ENCODE measurements at regions of chr12 and their contacts with region 1.

Region 1: GRCh38 chr12:108457006-108457733 is 57.9 kb upstream of the FICD start:
- DNase-seq: peak in 4 of 5 donors; percentile 2 to 41 (median 25)
- H3K4me3 ChIP-seq: no peak overlapping the region
- H3K4me3 Mint-ChIP-seq: no peak overlapping the region
- H3K27ac ChIP-seq: no peak overlapping the region
- H3K27ac Mint-ChIP-seq: no peak overlapping the region
- H3K4me1 ChIP-seq: no peaks in the 10 kb centered on the region
- H3K4me1 Mint-ChIP-seq: no peaks in the 10 kb centered on the region
- H3K27me3 ChIP-seq: no peaks in the 10 kb centered on the region
- H3K27me3 Mint-ChIP-seq: peaks cover 15 to 36% of the 10 kb centered on the region in 2 donors

Region 2: DNA sequence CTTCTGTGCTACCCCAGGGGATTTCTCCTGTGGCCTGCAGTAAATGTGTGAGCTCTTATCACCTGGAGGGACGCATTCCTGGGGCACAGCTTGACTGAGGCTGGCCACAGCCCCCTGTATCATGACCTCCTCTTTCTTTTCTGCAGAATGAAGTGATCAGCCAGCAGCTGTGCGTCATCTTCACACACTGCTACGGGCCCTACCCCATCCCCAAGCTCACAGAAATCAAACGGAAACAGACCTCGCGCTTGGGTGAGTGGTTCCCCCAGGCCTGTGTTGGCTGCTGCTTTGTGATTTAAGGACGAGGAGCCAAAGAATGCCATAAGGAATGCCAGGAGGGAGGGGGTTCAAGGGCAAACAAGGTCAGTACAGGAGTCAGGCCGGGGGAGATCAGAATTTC is 822.0 kb before region 1 on chr12:
- CTCF ChIA-PET with region 1: no interaction called
- POLR2A ChIA-PET with region 1: no interaction called
- intact Hi-C with region 1: no loop called
- DNase-seq: no peak
- H3K4me3 ChIP-seq: no peak overlapping the region
- H3K4me3 Mint-ChIP-seq: no peak overlapping the region
- H3K27ac ChIP-seq: no peak overlapping the region
- H3K27ac Mint-ChIP-seq: peak overlapping the region in 1 of 7 donors; percentile 48
- H3K4me1 ChIP-seq: no peaks in the 10 kb centered on the region
- H3K4me1 Mint-ChIP-seq: no peaks in the 10 kb centered on the region
- H3K27me3 ChIP-seq: no peaks in the 10 kb centered on the region
- H3K27me3 Mint-ChIP-seq: no peaks in the 10 kb centered on the region

Region 3: DNA sequence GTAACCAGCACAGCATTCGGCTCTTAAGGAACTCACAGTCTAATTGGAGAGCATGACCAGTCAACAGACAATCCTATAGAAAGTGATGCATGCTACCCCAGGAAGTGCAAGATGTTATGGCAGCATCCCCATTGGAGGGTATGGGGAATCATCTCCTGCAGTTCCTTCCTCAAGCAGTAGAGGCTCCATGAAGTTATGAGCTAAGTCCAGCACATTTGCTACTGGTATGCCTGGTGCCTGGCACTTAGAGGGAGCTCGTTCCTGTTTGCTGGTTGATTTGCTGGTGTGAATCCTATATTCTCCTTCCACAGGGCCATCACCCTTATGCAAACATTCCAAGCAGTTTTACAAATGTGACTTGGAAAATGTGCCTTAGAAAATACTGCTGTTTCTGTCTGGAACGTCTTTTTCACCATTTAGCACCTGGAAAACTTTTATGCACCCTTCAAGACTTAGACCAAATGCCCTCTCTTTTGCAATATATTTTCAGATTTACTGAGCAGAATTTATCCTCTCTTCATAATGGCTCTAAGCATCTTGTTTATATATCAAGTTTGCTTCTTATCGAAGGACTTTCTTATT is 464.2 kb before region 1 on chr12:
- CTCF ChIA-PET with region 1: interaction called, 6 read pairs
- POLR2A ChIA-PET with region 1: no interaction called
- intact Hi-C with region 1: loop called (anchors 2 kb)
- DNase-seq: no peak
- H3K4me3 ChIP-seq: no peak overlapping the region
- H3K4me3 Mint-ChIP-seq: no peak overlapping the region
- H3K27ac ChIP-seq: no peak overlapping the region
- H3K27ac Mint-ChIP-seq: no peak overlapping the region
- H3K4me1 ChIP-seq: no peaks in the 10 kb centered on the region
- H3K4me1 Mint-ChIP-seq: no peaks in the 10 kb centered on the region
- H3K27me3 ChIP-seq: no peaks in the 10 kb centered on the region
- H3K27me3 Mint-ChIP-seq: peaks cover 1 to 12% of the 10 kb centered on the region in 2 donors

Region 4: GRCh38 chr12:108234158-108234557 is 223.0 kb before region 1 on chr12:
- CTCF ChIA-PET with region 1: interaction called, 12 read pairs
- POLR2A ChIA-PET with region 1: no interaction called
- intact Hi-C with region 1: no loop called
- DNase-seq: no peak
- H3K4me3 ChIP-seq: no peak overlapping the region
- H3K4me3 Mint-ChIP-seq: no peak overlapping the region
- H3K27ac ChIP-seq: no peak overlapping the region
- H3K27ac Mint-ChIP-seq: no peak overlapping the region
- H3K4me1 ChIP-seq: no peaks in the 10 kb centered on the region
- H3K4me1 Mint-ChIP-seq: no peaks in the 10 kb centered on the region
- H3K27me3 ChIP-seq: no peaks in the 10 kb centered on the region
- H3K27me3 Mint-ChIP-seq: peaks cover 13 to 25% of the 10 kb centered on the region in 2 donors

Region 5: GRCh38 chr12:108468201-108468968 is 11.2 kb after region 1 on chr12:
- CTCF ChIA-PET with region 1: interaction called, 18 read pairs
- POLR2A ChIA-PET with region 1: no interaction called
- intact Hi-C with region 1: no loop called
- DNase-seq: peak in 4 of 5 donors; percentile 11 to 27 (median 20)
- H3K4me3 ChIP-seq: no peak overlapping the region
- H3K4me3 Mint-ChIP-seq: no peak overlapping the region
- H3K27ac ChIP-seq: no peak overlapping the region
- H3K27ac Mint-ChIP-seq: no peak overlapping the region
- H3K4me1 ChIP-seq: no peaks in the 10 kb centered on the region
- H3K4me1 Mint-ChIP-seq: no peaks in the 10 kb centered on the region
- H3K27me3 ChIP-seq: no peaks in the 10 kb centered on the region
- H3K27me3 Mint-ChIP-seq: peaks cover 13 to 25% of the 10 kb centered on the region in 2 donors

Region 6: GRCh38 chr12:108838194-108839017 is 381.2 kb after region 1 on chr12:
- CTCF ChIA-PET with region 1: no interaction called
- POLR2A ChIA-PET with region 1: no interaction called
- intact Hi-C with region 1: no loop called
- DNase-seq: peak; percentile 26 to 78 (median 38)
- H3K4me3 ChIP-seq: no peak overlapping the region
- H3K4me3 Mint-ChIP-seq: peak overlapping the region in 7 of 8 donors; percentile 67 to 89 (median 78)
- H3K27ac ChIP-seq: peak overlapping the region; percentile 42
- H3K27ac Mint-ChIP-seq: peak overlapping the region; percentile 61 to 96 (median 90)
- H3K4me1 ChIP-seq: peaks cover 31% of the 10 kb centered on the region
- H3K4me1 Mint-ChIP-seq: peaks cover 20 to 46% (median 33%) of the 10 kb centered on the region in 4 donors
- H3K27me3 ChIP-seq: no peaks in the 10 kb centered on the region
- H3K27me3 Mint-ChIP-seq: no peaks in the 10 kb centered on the region